PC-9 (cell line): ENCODE measurements at regions of chr6 and their contacts with region 1.

Region 1: DNA sequence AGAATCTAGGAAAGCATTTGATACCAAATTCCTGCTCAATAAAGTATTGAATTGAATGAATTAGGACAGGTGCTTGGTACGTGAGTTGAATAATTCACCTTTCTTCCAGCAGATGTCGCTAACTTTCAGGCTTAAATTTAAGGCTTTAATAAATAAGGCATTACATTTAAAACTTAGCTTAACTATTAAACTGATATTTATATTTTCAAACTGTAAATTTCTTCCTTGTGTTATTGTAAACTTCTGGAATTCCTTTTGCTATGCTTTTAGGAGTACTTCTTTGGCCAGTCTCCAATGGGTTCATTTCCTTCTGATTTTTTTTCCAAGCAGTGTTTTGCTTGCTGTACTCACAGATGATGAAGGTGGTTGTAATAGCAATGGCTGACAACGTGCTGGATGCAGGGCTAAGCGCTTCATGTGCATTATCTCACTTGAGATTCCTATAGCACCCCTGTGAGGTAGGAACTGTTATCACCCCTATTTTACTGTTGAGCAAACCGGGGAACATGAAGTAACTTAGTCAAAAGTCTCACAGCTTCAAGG is 71.3 kb upstream of the SLC2A12 start:
- DNase-seq: peak; percentile 15 to 58
- H3K4me3 ChIP-seq: no peak overlapping the region
- H3K27ac ChIP-seq: no peak overlapping the region
- H3K4me1 ChIP-seq: no peaks in the 10 kb centered on the region
- H3K27me3 ChIP-seq: no peaks in the 10 kb centered on the region
- CTCF ChIP-seq: peak; percentile 95

Region 2: DNA sequence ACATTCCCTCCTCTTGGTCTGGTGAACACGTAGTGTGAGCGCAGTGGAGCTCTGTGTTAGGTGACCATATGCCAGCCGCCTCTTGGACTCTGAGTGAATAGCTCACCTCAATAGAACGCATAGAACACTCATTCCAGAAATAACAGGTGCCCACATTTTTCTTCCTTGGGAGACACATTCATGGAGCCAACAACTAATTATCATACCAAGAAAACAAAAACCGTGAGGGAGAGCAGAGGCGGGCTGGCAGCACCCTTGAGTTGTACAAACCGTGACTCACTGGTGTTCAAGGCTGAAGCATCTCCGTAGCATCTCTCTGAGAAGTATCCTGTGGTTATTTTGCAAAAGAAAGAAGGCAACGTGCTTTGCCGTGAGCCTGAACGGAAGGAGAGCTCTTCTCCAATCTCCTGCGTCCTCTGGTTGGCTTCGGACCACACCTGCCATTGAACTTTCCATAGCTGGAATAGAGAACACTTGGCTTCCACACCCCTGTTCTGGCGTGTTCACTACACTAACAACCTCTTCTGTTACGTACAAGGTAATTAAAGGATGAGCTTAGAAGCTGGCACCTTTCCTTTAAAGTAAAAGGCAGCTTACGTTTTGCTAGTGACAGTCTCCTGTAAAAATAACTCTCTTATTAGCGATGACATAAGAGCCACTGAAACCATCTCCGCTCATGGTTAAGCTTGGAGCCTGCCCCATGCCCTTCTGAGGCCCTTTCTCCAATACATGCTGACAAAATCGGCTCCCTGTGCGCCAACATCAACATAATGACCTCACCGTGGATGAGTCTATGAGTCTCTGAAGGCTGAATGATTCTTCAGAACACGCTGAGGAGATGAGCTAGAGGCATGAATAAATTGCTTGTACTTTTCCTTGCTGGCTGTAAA is 224.4 kb after region 1 on chr6:
- CTCF ChIA-PET with region 1: interaction called, 10 read pairs
- POLR2A ChIA-PET with region 1: no interaction called
- intact Hi-C with region 1: no loop called
- DNase-seq: no peak
- H3K4me3 ChIP-seq: no peak overlapping the region
- H3K27ac ChIP-seq: no peak overlapping the region
- H3K4me1 ChIP-seq: no peaks in the 10 kb centered on the region
- H3K27me3 ChIP-seq: no peaks in the 10 kb centered on the region
- CTCF ChIP-seq: no peak

Region 3: GRCh38 chr6:134882426-134883038 is 758.8 kb after region 1 on chr6:
- CTCF ChIA-PET with region 1: no interaction called
- POLR2A ChIA-PET with region 1: no interaction called
- intact Hi-C with region 1: loop called (anchors 1 kb)
- DNase-seq: peak in 1 of 2 experiments; percentile 59
- H3K4me3 ChIP-seq: no peak overlapping the region
- H3K27ac ChIP-seq: no peak overlapping the region
- H3K4me1 ChIP-seq: no peaks in the 10 kb centered on the region
- H3K27me3 ChIP-seq: no peaks in the 10 kb centered on the region
- CTCF ChIP-seq: peak; percentile 100

Region 4: DNA sequence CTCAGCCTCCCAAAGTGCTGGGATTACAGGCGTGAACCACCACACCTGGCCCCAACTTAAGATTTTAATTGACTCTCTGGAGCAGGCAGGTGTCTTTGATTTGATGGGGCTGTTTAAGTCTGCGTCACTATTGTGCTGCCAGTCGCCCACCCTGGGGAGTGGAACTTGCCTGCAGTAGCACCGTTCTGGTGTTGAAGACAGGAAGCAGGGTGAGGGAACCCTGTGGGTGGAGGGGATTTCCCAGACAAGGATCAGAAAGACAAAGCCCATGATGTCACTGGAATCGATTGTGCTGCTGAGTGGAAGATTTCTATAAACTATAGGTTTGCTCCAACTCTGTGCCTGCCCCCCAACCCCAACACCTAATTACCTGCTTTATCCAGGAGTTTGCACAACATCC is 815.2 kb after region 1 on chr6:
- CTCF ChIA-PET with region 1: interaction called, 8 read pairs
- POLR2A ChIA-PET with region 1: no interaction called
- intact Hi-C with region 1: loop called (anchors 1 kb)
- DNase-seq: no peak
- H3K4me3 ChIP-seq: no peak overlapping the region
- H3K27ac ChIP-seq: no peak overlapping the region
- H3K4me1 ChIP-seq: no peaks in the 10 kb centered on the region
- H3K27me3 ChIP-seq: no peaks in the 10 kb centered on the region
- CTCF ChIP-seq: no peak

Region 5: GRCh38 chr6:135438907-135439535 is 1315.3 kb after region 1 on chr6:
- CTCF ChIA-PET with region 1: no interaction called
- POLR2A ChIA-PET with region 1: no interaction called
- intact Hi-C with region 1: loop called (anchors 1 kb)
- DNase-seq: peak in 1 of 2 experiments; percentile 35
- H3K4me3 ChIP-seq: no peak overlapping the region
- H3K27ac ChIP-seq: no peak overlapping the region
- H3K4me1 ChIP-seq: no peaks in the 10 kb centered on the region
- H3K27me3 ChIP-seq: no peaks in the 10 kb centered on the region
- CTCF ChIP-seq: peak; percentile 73